ENCODE measurements at regions of chr19 and their contacts with region 1.

Region 1: GRCh38 chr19:41753936-41754529 is 1.3 kb upstream of the CEACAM6 start:
- DNase-seq: peak; percentile 79
- ATAC-seq: peak; percentile 81
- H3K4me3 Mint-ChIP-seq: no peak overlapping the region
- H3K27ac Mint-ChIP-seq: peak overlapping the region; percentile 48; the same call in 1 of the 2 replicates
- H3K4me1 Mint-ChIP-seq: peaks cover 2% of the 10 kb centered on the region; the same call in 1 of the 2 replicates
- H3K27me3 Mint-ChIP-seq: peaks cover 6% of the 10 kb centered on the region
- CTCF ChIP-seq: peak; percentile 74

Region 2: GRCh38 chr19:41641879-41642485 is 112.1 kb before region 1 on chr19:
- CTCF ChIA-PET with region 1: interaction called, 23 read pairs
- POLR2A ChIA-PET with region 1: no interaction called
- DNase-seq: peak; percentile 81
- ATAC-seq: peak; percentile 96
- H3K4me3 Mint-ChIP-seq: no peak overlapping the region
- H3K27ac Mint-ChIP-seq: no peak overlapping the region
- H3K4me1 Mint-ChIP-seq: no peaks in the 10 kb centered on the region
- H3K27me3 Mint-ChIP-seq: no peaks in the 10 kb centered on the region
- CTCF ChIP-seq: peak; percentile 92

Region 3: GRCh38 chr19:41726493-41726892 is 27.5 kb before region 1 on chr19:
- CTCF ChIA-PET with region 1: interaction called, 10 read pairs
- POLR2A ChIA-PET with region 1: no interaction called
- DNase-seq: peak; percentile 33
- ATAC-seq: peak; percentile 99
- H3K4me3 Mint-ChIP-seq: no peak overlapping the region
- H3K27ac Mint-ChIP-seq: no peak overlapping the region
- H3K4me1 Mint-ChIP-seq: peaks cover 5% of the 10 kb centered on the region; the same call in 1 of the 2 replicates
- H3K27me3 Mint-ChIP-seq: peaks cover 4% of the 10 kb centered on the region; the same call in 1 of the 2 replicates
- CTCF ChIP-seq: no peak

Region 4: GRCh38 chr19:41767115-41767514 is 13.1 kb after region 1 on chr19:
- CTCF ChIA-PET with region 1: interaction called, 26 read pairs
- POLR2A ChIA-PET with region 1: no interaction called
- DNase-seq: no peak
- ATAC-seq: no peak
- H3K4me3 Mint-ChIP-seq: no peak overlapping the region
- H3K27ac Mint-ChIP-seq: no peak overlapping the region
- H3K4me1 Mint-ChIP-seq: no peaks in the 10 kb centered on the region
- H3K27me3 Mint-ChIP-seq: peaks cover 19% of the 10 kb centered on the region
- CTCF ChIP-seq: no peak

Region 5: DNA sequence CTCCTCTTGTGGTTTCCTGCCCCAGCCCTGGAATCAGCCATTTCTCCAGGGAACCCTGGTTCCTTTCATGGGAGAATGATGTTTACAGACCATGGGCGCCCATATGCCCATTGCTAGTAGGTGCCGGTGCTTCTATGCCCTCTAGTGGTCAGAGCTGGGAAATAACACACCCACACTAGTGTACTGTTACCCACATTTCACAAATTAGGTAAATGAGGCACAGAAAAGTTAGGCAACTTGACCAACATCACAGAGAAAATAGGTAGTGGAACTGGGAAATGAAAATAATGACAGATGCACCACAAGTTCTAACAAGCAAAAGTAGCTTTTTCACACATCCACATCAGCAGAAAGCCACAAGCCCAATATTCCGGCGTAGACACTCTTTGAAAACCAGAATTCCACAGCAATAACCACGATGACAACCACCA is 41.0 kb after region 1 on chr19:
- CTCF ChIA-PET with region 1: interaction called, 93 read pairs
- POLR2A ChIA-PET with region 1: no interaction called
- DNase-seq: peak; percentile 76
- ATAC-seq: peak; percentile 93
- H3K4me3 Mint-ChIP-seq: no peak overlapping the region
- H3K27ac Mint-ChIP-seq: no peak overlapping the region
- H3K4me1 Mint-ChIP-seq: peaks cover 4% of the 10 kb centered on the region
- H3K27me3 Mint-ChIP-seq: peaks cover 11% of the 10 kb centered on the region
- CTCF ChIP-seq: peak; percentile 86

Region 6: GRCh38 chr19:41821003-41821735 is 67.1 kb after region 1 on chr19:
- CTCF ChIA-PET with region 1: interaction called, 66 read pairs
- POLR2A ChIA-PET with region 1: no interaction called
- DNase-seq: peak; percentile 66
- ATAC-seq: peak; percentile 99
- H3K4me3 Mint-ChIP-seq: no peak overlapping the region
- H3K27ac Mint-ChIP-seq: no peak overlapping the region
- H3K4me1 Mint-ChIP-seq: no peaks in the 10 kb centered on the region
- H3K27me3 Mint-ChIP-seq: peaks cover 4% of the 10 kb centered on the region; the same call in 1 of the 2 replicates
- CTCF ChIP-seq: peak; percentile 37; the same call in 1 of the 2 replicates

Measured in WTC11 (cell line).